Activated naive CD4-positive, alpha-beta T cell treated with anti-CD3 and anti-CD28 coated beads for 36 hours (primary cell): ENCODE measurements at regions of chr12 and their contacts with region 1.

Region 1: GRCh38 chr12:51341259-51342007 is 5.0 kb downstream of the CELA1 start:
- DNase-seq: peak; percentile 88
- H3K4me3 Mint-ChIP-seq: no peak overlapping the region
- H3K27ac Mint-ChIP-seq: no peak overlapping the region
- H3K4me1 Mint-ChIP-seq: peaks cover 18% of the 10 kb centered on the region
- H3K27me3 Mint-ChIP-seq: no peaks in the 10 kb centered on the region

Region 2: DNA sequence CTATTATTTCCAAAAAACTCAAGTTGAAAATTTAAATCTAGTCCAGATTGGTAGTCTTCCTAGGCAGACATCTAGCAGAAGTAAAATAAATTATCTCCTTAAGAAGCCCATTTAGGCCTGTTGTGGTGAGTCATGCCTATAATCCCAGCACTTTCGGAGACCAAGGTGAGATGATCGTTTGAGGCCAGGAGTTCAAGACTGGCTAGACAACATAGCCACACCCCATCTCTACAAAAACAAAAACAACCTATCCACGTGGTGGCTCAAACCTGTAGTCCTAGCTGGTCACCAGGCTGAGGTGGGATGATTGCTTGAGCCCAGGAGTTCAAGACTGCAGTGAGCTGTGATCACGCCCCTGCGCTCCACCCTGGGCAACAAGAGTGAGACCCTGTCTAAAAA is 921.9 kb before region 1 on chr12:
- CTCF ChIA-PET with region 1: no interaction called
- intact Hi-C with region 1: no loop called
- DNase-seq: no peak
- H3K4me3 Mint-ChIP-seq: no peak overlapping the region
- H3K27ac Mint-ChIP-seq: no peak overlapping the region
- H3K4me1 Mint-ChIP-seq: peaks cover 29% of the 10 kb centered on the region
- H3K27me3 Mint-ChIP-seq: no peaks in the 10 kb centered on the region

Region 3: DNA sequence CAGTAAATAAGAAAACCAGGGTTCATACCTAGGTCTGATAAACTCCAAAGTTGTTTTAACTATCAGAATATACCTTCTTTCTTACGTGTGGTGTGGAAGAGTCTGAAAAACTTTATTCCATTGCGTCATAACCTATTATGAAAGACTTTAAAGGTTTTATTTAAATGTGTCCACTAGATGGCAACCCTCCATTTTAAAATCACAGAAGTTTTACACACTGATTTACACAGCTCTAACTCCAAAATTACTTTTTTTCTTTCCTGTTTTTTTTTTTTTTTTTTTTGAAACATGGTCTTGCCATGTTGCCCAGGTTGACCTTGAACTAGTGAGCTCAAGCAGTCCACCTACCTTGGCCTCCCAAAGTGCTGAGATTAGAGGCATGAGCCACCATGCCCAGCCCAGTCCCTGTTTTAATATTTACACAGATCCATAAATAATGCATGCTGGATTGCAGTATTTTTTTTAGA is 516.0 kb before region 1 on chr12:
- CTCF ChIA-PET with region 1: no interaction called
- intact Hi-C with region 1: loop called (anchors 5 kb)
- DNase-seq: no peak
- H3K4me3 Mint-ChIP-seq: no peak overlapping the region
- H3K27ac Mint-ChIP-seq: peak overlapping the region; percentile 52
- H3K4me1 Mint-ChIP-seq: peaks cover 10% of the 10 kb centered on the region
- H3K27me3 Mint-ChIP-seq: no peaks in the 10 kb centered on the region

Region 4: GRCh38 chr12:51254592-51254991 is 86.8 kb before region 1 on chr12:
- CTCF ChIA-PET with region 1: interaction called, 14 read pairs
- intact Hi-C with region 1: no loop called
- DNase-seq: no peak
- H3K4me3 Mint-ChIP-seq: no peak overlapping the region
- H3K27ac Mint-ChIP-seq: no peak overlapping the region
- H3K4me1 Mint-ChIP-seq: no peaks in the 10 kb centered on the region
- H3K27me3 Mint-ChIP-seq: no peaks in the 10 kb centered on the region

Region 5: GRCh38 chr12:51270067-51270970 is 71.1 kb before region 1 on chr12 and contains the start of gene SMAGP:
- CTCF ChIA-PET with region 1: interaction called, 86 read pairs
- intact Hi-C with region 1: loop called (anchors 1 kb)
- DNase-seq: peak; percentile 51
- H3K4me3 Mint-ChIP-seq: peak within 1 kb of the TSS; percentile 83
- H3K27ac Mint-ChIP-seq: no peak within 1 kb of the TSS
- H3K4me1 Mint-ChIP-seq: peaks cover 20% of the 10 kb centered on the region
- H3K27me3 Mint-ChIP-seq: peaks cover 8% of the 10 kb centered on the region
- total RNA-seq, gene SMAGP: 0.54 to 1.2 TPM

Region 6: GRCh38 chr12:51351913-51352532 is 10.6 kb after region 1 on chr12:
- CTCF ChIA-PET with region 1: interaction called, 24 read pairs
- intact Hi-C with region 1: no loop called
- DNase-seq: peak; percentile 68
- H3K4me3 Mint-ChIP-seq: no peak overlapping the region
- H3K27ac Mint-ChIP-seq: no peak overlapping the region
- H3K4me1 Mint-ChIP-seq: peaks cover 5% of the 10 kb centered on the region
- H3K27me3 Mint-ChIP-seq: no peaks in the 10 kb centered on the region

Region 7: GRCh38 chr12:51788876-51789275 is 447.4 kb after region 1 on chr12:
- CTCF ChIA-PET with region 1: no interaction called
- intact Hi-C with region 1: no loop called
- DNase-seq: no peak
- H3K4me3 Mint-ChIP-seq: no peak overlapping the region
- H3K27ac Mint-ChIP-seq: no peak overlapping the region
- H3K4me1 Mint-ChIP-seq: no peaks in the 10 kb centered on the region
- H3K27me3 Mint-ChIP-seq: no peaks in the 10 kb centered on the region